Lower leg skin (tissue), 4 donors: ENCODE measurements at regions of chr10 and their contacts with region 1.

Region 1: GRCh38 chr10:7243873-7244272 is 167.0 kb downstream of the SFMBT2 start:
- DNase-seq: no peak
- H3K4me3 ChIP-seq: no peak overlapping the region
- CTCF ChIP-seq: no peak
- POLR2A ChIP-seq: no peak

Region 2: GRCh38 chr10:6920072-6921019 is 323.5 kb before region 1 on chr10:
- intact Hi-C with region 1: no loop called
- DNase-seq: peak; percentile 33 to 87
- H3K4me3 ChIP-seq: no peak overlapping the region
- CTCF ChIP-seq: no peak
- POLR2A ChIP-seq: no peak

Region 3: GRCh38 chr10:8616166-8616565 is 1372.3 kb after region 1 on chr10:
- intact Hi-C with region 1: loop called (anchors 5 kb)
- DNase-seq: no peak
- H3K4me3 ChIP-seq: no peak overlapping the region
- CTCF ChIP-seq: no peak
- POLR2A ChIP-seq: no peak